Activated CD8-positive, alpha-beta T cell treated with anti-CD3 and anti-CD28 coated beads, Interleukin-2, amount 10 ng/mL, durations not matched to agents 7 days and 5 days (primary cell): ENCODE measurements at regions of chr5 and their contacts with region 1.

Region 1: DNA sequence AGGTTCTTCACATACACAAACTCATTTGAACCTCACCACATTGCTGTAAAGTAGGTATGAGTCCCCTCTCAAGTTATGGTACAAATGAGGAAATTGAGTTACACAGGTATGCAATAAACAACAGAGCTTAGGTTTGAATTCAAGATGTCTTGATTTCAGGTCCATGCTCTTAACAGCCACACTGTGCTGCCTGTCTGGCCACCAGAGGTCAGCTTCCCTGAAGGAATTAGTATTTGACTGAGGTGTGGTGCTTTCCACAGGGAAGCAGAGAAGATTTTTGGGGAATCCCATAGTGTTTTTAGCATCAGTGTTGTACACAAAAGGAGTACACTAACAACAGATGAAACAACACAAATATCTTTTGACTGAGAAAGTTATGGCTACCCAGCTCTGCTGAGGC is 94.4 kb upstream of the ITGA1 start:
- DNase-seq: peak; percentile 54
- ATAC-seq: peak; percentile 55
- H3K4me3 Mint-ChIP-seq: no peak overlapping the region
- H3K27ac Mint-ChIP-seq: no peak overlapping the region
- H3K4me1 Mint-ChIP-seq: peaks cover 20% of the 10 kb centered on the region
- H3K27me3 Mint-ChIP-seq: peaks cover 4% of the 10 kb centered on the region

Region 2: DNA sequence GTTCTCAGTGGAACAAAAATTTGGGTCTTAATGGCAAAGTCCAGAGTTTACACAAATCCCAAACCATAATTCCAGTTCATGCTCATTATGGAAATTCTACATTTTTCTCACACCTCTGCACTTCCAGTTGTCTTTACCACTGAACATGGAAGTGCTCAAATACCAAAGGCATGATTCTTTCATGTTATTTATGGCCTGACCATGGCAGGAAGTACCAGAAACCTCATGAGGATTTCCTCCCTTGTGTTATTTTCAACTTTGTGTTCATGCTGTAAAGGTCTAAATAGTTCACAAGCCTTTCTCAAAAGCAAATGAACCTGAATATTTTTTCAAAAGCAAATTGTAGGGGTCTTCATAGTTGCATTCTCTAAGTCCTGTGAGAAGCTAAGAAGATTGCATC is 12.4 kb after region 1 on chr5:
- CTCF ChIA-PET with region 1: interaction called, 20 read pairs
- POLR2A ChIA-PET with region 1: no interaction called
- DNase-seq: peak; percentile 37
- ATAC-seq: peak; percentile 38
- H3K4me3 Mint-ChIP-seq: peak overlapping the region; percentile 38
- H3K27ac Mint-ChIP-seq: peak overlapping the region; percentile 52
- H3K4me1 Mint-ChIP-seq: peaks cover 75% of the 10 kb centered on the region
- H3K27me3 Mint-ChIP-seq: no peaks in the 10 kb centered on the region

Region 3: GRCh38 chr5:52787600-52788504 is 94.6 kb after region 1 on chr5 and contains the starts of genes ITGA1 and PELO:
- CTCF ChIA-PET with region 1: interaction called, 20 read pairs
- POLR2A ChIA-PET with region 1: no interaction called
- DNase-seq: peak; percentile 64
- ATAC-seq: peak; percentile 95
- H3K4me3 Mint-ChIP-seq: peak within 1 kb of the TSS; percentile 92
- H3K27ac Mint-ChIP-seq: peak within 1 kb of the TSS; percentile 88
- H3K4me1 Mint-ChIP-seq: peaks cover 47% of the 10 kb centered on the region
- H3K27me3 Mint-ChIP-seq: no peaks in the 10 kb centered on the region
- total RNA-seq, gene ITGA1: 18.0 to 19.2 TPM
- total RNA-seq, gene PELO: 22.9 to 25.7 TPM

Region 4: GRCh38 chr5:53170748-53171349 is 477.6 kb after region 1 on chr5:
- CTCF ChIA-PET with region 1: no interaction called
- POLR2A ChIA-PET with region 1: no interaction called
- DNase-seq: no peak
- ATAC-seq: no peak
- H3K4me3 Mint-ChIP-seq: no peak overlapping the region
- H3K27ac Mint-ChIP-seq: no peak overlapping the region
- H3K4me1 Mint-ChIP-seq: no peaks in the 10 kb centered on the region
- H3K27me3 Mint-ChIP-seq: peaks cover 13% of the 10 kb centered on the region